ENCODE measurements at regions of chr2 and their contacts with region 1.

Region 1: GRCh38 chr2:160269803-160270570 is 69.9 kb upstream of the ITGB6 start:
- DNase-seq: peak; percentile 92 to 96 (median 93)
- ATAC-seq: peak; percentile 89 to 91 (median 90)
- H3K4me3 ChIP-seq: peak overlapping the region; percentile 16 to 66 (median 52)
- H3K27ac ChIP-seq: peak overlapping the region; percentile 85 to 98 (median 96)
- H3K4me1 ChIP-seq: peaks cover 0 to 51% (median 26%) of the 10 kb centered on the region in 12 donors
- H3K27me3 ChIP-seq: no peaks in the 10 kb centered on the region
- CTCF ChIP-seq: peak; percentile 55 to 87 (median 70)
- POLR2A ChIP-seq: peak in 1 of 2 donors; percentile 57

Region 2: DNA sequence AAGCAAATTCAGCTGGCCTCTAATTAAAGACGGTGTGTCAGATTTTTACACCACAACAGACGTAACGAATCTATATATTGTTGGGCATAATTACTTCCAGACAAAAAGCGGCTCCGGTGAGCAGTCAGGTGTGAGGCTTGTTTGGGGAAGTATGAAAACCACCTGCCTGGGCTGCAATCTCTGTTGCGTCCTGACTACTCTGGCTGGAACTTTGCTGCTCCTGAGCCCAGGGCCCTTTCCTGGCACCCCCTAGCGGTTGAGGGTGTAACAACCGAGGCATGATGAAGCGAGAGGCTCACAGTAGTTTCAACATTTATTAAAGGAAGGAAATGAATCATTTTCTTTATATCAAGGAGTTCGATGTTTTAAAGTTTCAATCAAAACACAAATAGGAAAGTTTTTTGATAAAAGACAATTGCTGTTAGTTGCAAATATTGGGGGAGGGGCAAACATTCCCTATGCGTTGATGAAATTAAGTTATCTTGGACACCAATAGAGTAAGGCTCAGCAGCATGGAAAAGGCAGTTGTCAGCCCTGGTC is 59.3 kb before region 1 on chr2:
- intact Hi-C with region 1: loop called in 1 of 10 experiments (anchors 10 kb)
- DNase-seq: peak; percentile 22 to 73 (median 51)
- ATAC-seq: no peak
- H3K4me3 ChIP-seq: no peak overlapping the region
- H3K27ac ChIP-seq: no peak overlapping the region
- H3K4me1 ChIP-seq: peaks cover 0 to 45% (median 23%) of the 10 kb centered on the region in 12 donors
- H3K27me3 ChIP-seq: no peaks in the 10 kb centered on the region
- CTCF ChIP-seq: peak; percentile 41 to 78 (median 50)
- POLR2A ChIP-seq: no peak

Region 3: DNA sequence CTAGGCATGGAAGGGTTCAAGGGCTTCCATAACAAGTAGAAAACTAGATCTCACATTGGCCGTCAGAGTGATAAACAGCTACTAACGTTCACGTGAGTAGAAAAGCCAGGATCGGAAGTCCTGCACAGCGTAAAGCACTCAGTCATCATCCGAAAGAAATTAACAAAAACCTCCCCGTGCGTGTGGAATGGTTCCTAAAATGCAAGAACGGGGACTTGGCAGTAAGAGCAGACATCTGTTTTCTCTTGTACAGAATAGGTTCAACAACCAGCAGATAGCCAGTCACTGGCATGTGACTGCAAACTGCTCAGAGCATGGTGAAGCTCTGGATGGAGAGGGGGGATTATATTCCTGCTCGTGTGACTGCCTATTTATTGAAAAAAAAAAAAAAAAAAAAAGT is 37.0 kb after region 1 on chr2:
- intact Hi-C with region 1: loop called in 1 of 10 experiments (anchors 5 kb)
- DNase-seq: peak in 2 of 5 donors; percentile 33 to 41
- ATAC-seq: peak; percentile 62 to 76 (median 66)
- H3K4me3 ChIP-seq: peak overlapping the region in 1 of 12 donors; percentile 19
- H3K27ac ChIP-seq: peak overlapping the region in 9 of 12 donors; percentile 7 to 73 (median 58)
- H3K4me1 ChIP-seq: peaks cover 4 to 76% (median 59%) of the 10 kb centered on the region in 12 donors
- H3K27me3 ChIP-seq: no peaks in the 10 kb centered on the region
- CTCF ChIP-seq: no peak
- POLR2A ChIP-seq: no peak

Region 4: GRCh38 chr2:160970052-160970965 is 700.3 kb after region 1 on chr2:
- intact Hi-C with region 1: loop called in 4 of 10 experiments (anchors 5 to 10 kb)
- DNase-seq: peak in 2 of 5 donors; percentile 29 to 30
- ATAC-seq: peak in 3 of 4 donors; percentile 58 to 75 (median 69)
- H3K4me3 ChIP-seq: peak overlapping the region in 9 of 12 donors; percentile 17 to 38 (median 29)
- H3K27ac ChIP-seq: peak overlapping the region in 11 of 12 donors; percentile 22 to 76 (median 63)
- H3K4me1 ChIP-seq: peaks cover 0 to 23% (median 10%) of the 10 kb centered on the region in 12 donors
- H3K27me3 ChIP-seq: no peaks in the 10 kb centered on the region
- CTCF ChIP-seq: peak; percentile 63 to 87 (median 80)
- POLR2A ChIP-seq: no peak